GM12878 (cell line): ENCODE measurements at regions of chr21 and their contacts with region 1.

Region 1: DNA sequence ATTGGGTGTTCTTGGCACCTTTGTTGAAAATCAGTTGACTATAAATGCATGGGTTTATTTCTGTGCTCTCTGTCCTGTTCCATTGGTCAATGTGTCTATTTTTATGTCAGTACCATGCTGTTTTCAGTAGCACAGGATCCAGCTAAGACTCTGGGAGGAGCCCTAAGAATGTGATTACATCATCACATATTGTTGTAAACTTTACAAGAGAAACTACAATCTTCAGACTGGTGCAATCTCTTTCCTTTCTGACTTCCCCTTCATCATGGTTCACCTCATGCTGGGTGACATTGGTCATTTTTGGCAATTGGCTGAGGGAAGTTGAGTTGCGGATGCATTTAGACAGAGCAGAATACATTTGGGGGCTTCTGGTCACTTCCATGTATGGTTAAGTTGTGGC is 88.4 kb downstream of the C21orf91 start:
- DNase-seq: no peak
- ATAC-seq: no peak; the same call in 2 of the 3 replicates
- H3K4me3 ChIP-seq: no peak overlapping the region
- H3K27ac ChIP-seq: no peak overlapping the region
- H3K4me1 ChIP-seq: no peaks in the 10 kb centered on the region
- H3K27me3 ChIP-seq: no peaks in the 10 kb centered on the region
- CTCF ChIP-seq: no peak; a peak in 1 of 6 replicates
- EP300 ChIP-seq: no peak
- POLR2A ChIP-seq: no peak
- RAD21 ChIP-seq: no peak

Region 2: GRCh38 chr21:17741806-17742550 is 11.2 kb after region 1 on chr21:
- CTCF ChIA-PET with region 1: interaction called, 3 read pairs
- POLR2A ChIA-PET with region 1: no interaction called
- RAD21 ChIA-PET with region 1: no interaction called
- SMC1A ChIA-PET with region 1: interaction called, 11 read pairs
- in situ Hi-C with region 1: no loop called
- intact Hi-C with region 1: no loop called
- DNase-seq: no peak
- ATAC-seq: no peak
- H3K4me3 ChIP-seq: no peak overlapping the region
- H3K27ac ChIP-seq: no peak overlapping the region
- H3K4me1 ChIP-seq: peaks cover 4% of the 10 kb centered on the region; the same call in 1 of the 2 replicates
- H3K27me3 ChIP-seq: no peaks in the 10 kb centered on the region
- CTCF ChIP-seq: no peak
- EP300 ChIP-seq: no peak
- POLR2A ChIP-seq: no peak
- RAD21 ChIP-seq: no peak